ENCODE measurements at regions of chr16 and their contacts with region 1.

Region 1: GRCh38 chr16:48164907-48165726 is 9.3 kb upstream of the ABCC12 start:
- DNase-seq: peak; percentile 65
- ATAC-seq: peak; percentile 99
- H3K4me3 ChIP-seq: no peak overlapping the region
- H3K27ac ChIP-seq: no peak overlapping the region
- H3K4me1 ChIP-seq: no peaks in the 10 kb centered on the region; the same call in 1 of the 2 replicates
- H3K27me3 ChIP-seq: peaks cover 2% of the 10 kb centered on the region; the same call in 1 of the 2 replicates
- CTCF ChIP-seq: peak; percentile 93
- POLR2A ChIP-seq: no peak
- RAD21 ChIP-seq: peak; percentile 98

Region 2: DNA sequence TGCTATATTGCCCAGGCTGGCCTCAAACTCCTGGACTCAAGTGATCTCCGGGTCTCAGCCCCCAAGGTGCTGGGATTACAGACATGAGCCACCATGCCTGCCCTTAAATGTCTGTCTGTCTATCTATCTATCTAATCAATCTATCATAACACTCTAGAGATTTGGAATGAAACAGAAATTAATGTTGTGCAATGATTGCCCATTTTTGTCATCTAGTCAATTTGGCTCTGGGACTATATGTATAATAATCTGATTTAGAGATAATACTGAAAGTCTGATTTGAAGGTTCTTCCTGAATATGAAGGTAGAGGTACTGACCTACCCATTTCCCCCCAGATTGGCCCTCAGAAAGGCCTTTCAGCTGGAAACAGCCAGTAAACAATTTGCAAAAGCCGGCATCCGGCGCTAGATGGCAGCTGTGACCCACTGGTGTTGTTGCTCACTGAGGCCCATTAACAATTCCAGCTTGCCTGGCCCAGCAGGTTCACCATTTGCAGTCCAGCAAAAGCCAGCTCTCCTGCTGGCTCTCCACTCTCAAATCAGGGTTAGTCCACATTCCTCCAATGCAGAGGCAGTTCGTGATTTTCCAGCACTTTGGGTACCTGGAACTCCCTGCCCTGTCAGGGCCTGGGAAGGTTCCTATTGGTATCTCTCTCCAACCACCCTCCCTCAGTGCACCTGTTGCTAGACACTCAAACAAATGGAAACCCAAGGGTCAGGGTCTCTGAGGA is 1311.2 kb before region 1 on chr16:
- CTCF ChIA-PET with region 1: no interaction called
- POLR2A ChIA-PET with region 1: no interaction called
- dilution Hi-C with region 1: no loop called
- in situ Hi-C with region 1: no loop called
- intact Hi-C with region 1: loop called (anchors 2 kb)
- DNase-seq: peak; percentile 69
- ATAC-seq: peak; percentile 93
- H3K4me3 ChIP-seq: no peak overlapping the region
- H3K27ac ChIP-seq: no peak overlapping the region
- H3K4me1 ChIP-seq: no peaks in the 10 kb centered on the region
- H3K27me3 ChIP-seq: peaks cover 2% of the 10 kb centered on the region; the same call in 1 of the 2 replicates
- CTCF ChIP-seq: peak; percentile 97
- POLR2A ChIP-seq: no peak
- RAD21 ChIP-seq: peak; percentile 98

Region 3: DNA sequence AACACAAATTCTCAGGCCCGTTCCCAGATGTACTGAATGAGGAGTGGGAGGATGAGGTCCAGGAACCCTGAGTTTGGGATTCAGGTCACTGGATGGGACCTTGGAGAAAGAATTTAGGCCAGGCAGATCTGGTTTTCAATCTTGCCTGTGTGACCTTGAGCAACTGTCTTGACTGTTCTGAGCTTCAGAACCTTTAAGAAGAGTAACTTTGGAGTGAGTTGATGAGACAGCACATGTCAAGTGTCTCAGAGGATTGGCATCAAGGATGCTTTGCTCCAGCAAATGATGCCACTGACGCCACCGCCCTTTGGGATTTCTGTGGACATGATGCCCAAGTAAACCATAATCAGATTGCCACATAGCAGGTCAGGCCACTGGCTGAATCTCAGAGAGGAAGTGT is 1135.4 kb before region 1 on chr16:
- CTCF ChIA-PET with region 1: no interaction called
- POLR2A ChIA-PET with region 1: no interaction called
- dilution Hi-C with region 1: no loop called
- in situ Hi-C with region 1: loop called (anchors 5 kb)
- intact Hi-C with region 1: no loop called
- DNase-seq: no peak
- ATAC-seq: no peak
- H3K4me3 ChIP-seq: no peak overlapping the region
- H3K27ac ChIP-seq: no peak overlapping the region
- H3K4me1 ChIP-seq: no peaks in the 10 kb centered on the region
- H3K27me3 ChIP-seq: peaks cover 3% of the 10 kb centered on the region
- CTCF ChIP-seq: no peak
- POLR2A ChIP-seq: no peak
- RAD21 ChIP-seq: no peak

Region 4: GRCh38 chr16:47136101-47136820 is 1028.9 kb before region 1 on chr16:
- CTCF ChIA-PET with region 1: interaction called, 26 read pairs
- POLR2A ChIA-PET with region 1: no interaction called
- dilution Hi-C with region 1: no loop called
- in situ Hi-C with region 1: loop called (anchors 5 kb)
- intact Hi-C with region 1: no loop called
- DNase-seq: peak; percentile 45
- ATAC-seq: no peak
- H3K4me3 ChIP-seq: no peak overlapping the region
- H3K27ac ChIP-seq: no peak overlapping the region
- H3K4me1 ChIP-seq: no peaks in the 10 kb centered on the region
- H3K27me3 ChIP-seq: no peaks in the 10 kb centered on the region
- CTCF ChIP-seq: no peak
- POLR2A ChIP-seq: no peak
- RAD21 ChIP-seq: no peak

Region 5: GRCh38 chr16:47732523-47733111 is 432.5 kb before region 1 on chr16:
- CTCF ChIA-PET with region 1: no interaction called
- POLR2A ChIA-PET with region 1: no interaction called
- dilution Hi-C with region 1: no loop called
- in situ Hi-C with region 1: loop called (anchors 25 kb)
- intact Hi-C with region 1: no loop called
- DNase-seq: peak; percentile 99
- ATAC-seq: peak; percentile 66
- H3K4me3 ChIP-seq: no peak overlapping the region
- H3K27ac ChIP-seq: peak overlapping the region; percentile 76; the same call in 1 of the 2 replicates
- H3K4me1 ChIP-seq: peaks cover 12% of the 10 kb centered on the region
- H3K27me3 ChIP-seq: no peaks in the 10 kb centered on the region
- CTCF ChIP-seq: no peak
- POLR2A ChIP-seq: no peak
- RAD21 ChIP-seq: no peak

Region 6: GRCh38 chr16:48623304-48624016 is 458.3 kb after region 1 on chr16:
- CTCF ChIA-PET with region 1: no interaction called
- POLR2A ChIA-PET with region 1: no interaction called
- dilution Hi-C with region 1: no loop called
- in situ Hi-C with region 1: no loop called
- intact Hi-C with region 1: loop called (anchors 2 kb)
- DNase-seq: peak; percentile 75
- ATAC-seq: peak; percentile 99
- H3K4me3 ChIP-seq: peak overlapping the region; percentile 35
- H3K27ac ChIP-seq: peak overlapping the region; percentile 36
- H3K4me1 ChIP-seq: no peaks in the 10 kb centered on the region; the same call in 1 of the 2 replicates
- H3K27me3 ChIP-seq: no peaks in the 10 kb centered on the region; the same call in 1 of the 2 replicates
- CTCF ChIP-seq: peak; percentile 98
- POLR2A ChIP-seq: peak; percentile 58; the same call in 1 of the 2 replicates
- RAD21 ChIP-seq: peak; percentile 97

Measured in IMR-90 (cell line).